ENCODE measurements at regions of chr20 and their contacts with region 1.

Region 1: GRCh38 chr20:49508435-49509199 is 26.1 kb upstream of the KCNB1 start:
- DNase-seq: no peak
- H3K4me3 ChIP-seq: no peak overlapping the region
- H3K27me3 ChIP-seq: peaks cover 5% of the 10 kb centered on the region; the same call in 1 of the 2 replicates
- CTCF ChIP-seq: peak; percentile 63

Region 2: DNA sequence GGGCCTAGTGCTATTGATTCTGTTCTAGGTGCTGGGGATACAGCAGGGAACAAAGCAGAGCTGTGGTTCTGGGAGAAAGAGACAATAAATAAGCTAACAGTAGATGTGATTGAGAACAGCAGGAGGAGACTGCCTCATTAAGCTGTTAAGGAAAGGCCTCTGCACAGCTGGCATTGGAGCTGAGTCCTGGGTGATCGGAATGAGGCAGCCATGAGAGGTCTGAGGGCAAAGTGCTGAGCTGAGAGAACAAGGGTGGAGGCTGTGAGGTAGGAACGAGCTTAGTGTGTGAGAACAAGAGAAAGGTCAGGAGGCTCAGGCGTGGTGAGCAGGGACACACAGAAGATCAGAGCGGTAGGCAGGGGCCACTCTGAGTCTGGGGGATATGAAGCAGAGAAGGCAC is 271.1 kb before region 1 on chr20:
- CTCF ChIA-PET with region 1: no interaction called
- POLR2A ChIA-PET with region 1: no interaction called
- DNase-seq: no peak
- H3K4me3 ChIP-seq: no peak overlapping the region
- H3K27me3 ChIP-seq: no peaks in the 10 kb centered on the region
- CTCF ChIP-seq: no peak

Region 3: GRCh38 chr20:49328790-49329189 is 179.8 kb before region 1 on chr20:
- CTCF ChIA-PET with region 1: interaction called, 81 read pairs
- POLR2A ChIA-PET with region 1: no interaction called
- DNase-seq: no peak
- H3K4me3 ChIP-seq: no peak overlapping the region
- H3K27me3 ChIP-seq: peaks cover 28% of the 10 kb centered on the region
- CTCF ChIP-seq: no peak

Region 4: GRCh38 chr20:49338061-49338460 is 170.6 kb before region 1 on chr20:
- CTCF ChIA-PET with region 1: interaction called, 81 read pairs
- POLR2A ChIA-PET with region 1: interaction called, 4 read pairs
- DNase-seq: no peak
- H3K4me3 ChIP-seq: no peak overlapping the region
- H3K27me3 ChIP-seq: peaks cover under 1% of the 10 kb centered on the region; the same call in 1 of the 2 replicates
- CTCF ChIP-seq: no peak

Region 5: GRCh38 chr20:49361862-49362660 is 146.6 kb before region 1 on chr20:
- CTCF ChIA-PET with region 1: no interaction called
- POLR2A ChIA-PET with region 1: interaction called, 10 read pairs
- DNase-seq: no peak
- H3K4me3 ChIP-seq: no peak overlapping the region
- H3K27me3 ChIP-seq: peaks cover 4% of the 10 kb centered on the region; the same call in 1 of the 2 replicates
- CTCF ChIP-seq: no peak

Region 6: DNA sequence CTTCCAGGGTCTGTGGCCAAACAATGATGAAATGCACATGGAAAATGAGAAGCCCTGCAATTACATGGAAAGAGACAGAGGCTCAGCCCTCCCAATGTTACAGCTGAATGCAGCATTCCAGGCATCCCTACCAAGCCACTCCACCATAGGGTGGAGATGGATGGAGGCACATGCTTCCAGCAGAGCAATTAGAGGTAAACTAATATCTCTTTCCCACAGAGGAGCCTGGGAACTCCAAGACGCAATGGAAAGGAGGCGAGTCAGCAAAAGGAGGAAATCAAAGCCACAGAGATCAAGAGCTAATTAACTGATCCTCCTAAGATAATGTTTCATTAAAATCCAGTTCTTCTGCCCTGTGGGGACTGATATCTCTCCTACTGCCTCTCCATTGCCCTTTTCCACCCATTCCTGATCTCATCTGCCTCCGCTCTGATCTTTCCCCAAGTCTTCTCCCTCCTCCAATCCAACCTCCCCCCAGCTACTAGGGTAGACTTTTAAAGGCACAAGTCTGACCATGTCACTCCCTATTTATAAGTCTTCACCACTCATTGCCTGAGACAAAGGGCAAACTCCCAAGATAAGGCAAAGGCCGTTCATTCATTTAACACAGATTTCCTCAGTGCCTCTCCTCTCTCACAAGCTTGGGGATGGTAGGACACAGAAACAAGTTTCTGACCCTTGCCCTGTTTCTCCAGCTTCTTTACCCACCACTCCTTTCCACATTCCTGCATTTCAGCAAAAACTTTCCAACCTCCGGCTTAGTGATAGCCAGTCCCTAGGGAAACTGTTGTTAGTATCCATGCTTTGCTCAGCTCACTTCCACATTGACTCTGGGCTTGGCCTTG is 11.8 kb before region 1 on chr20:
- CTCF ChIA-PET with region 1: interaction called, 32 read pairs
- POLR2A ChIA-PET with region 1: no interaction called
- DNase-seq: no peak
- H3K4me3 ChIP-seq: no peak overlapping the region
- H3K27me3 ChIP-seq: peaks cover 8% of the 10 kb centered on the region; the same call in 1 of the 2 replicates
- CTCF ChIP-seq: no peak

Region 7: GRCh38 chr20:49534255-49534712 is 25.7 kb after region 1 on chr20:
- CTCF ChIA-PET with region 1: interaction called, 10 read pairs
- POLR2A ChIA-PET with region 1: no interaction called
- DNase-seq: no peak
- H3K4me3 ChIP-seq: no peak overlapping the region
- H3K27me3 ChIP-seq: no peaks in the 10 kb centered on the region
- CTCF ChIP-seq: peak; percentile 79

Region 8: GRCh38 chr20:49575551-49576060 is 67.0 kb after region 1 on chr20:
- CTCF ChIA-PET with region 1: no interaction called
- POLR2A ChIA-PET with region 1: no interaction called
- DNase-seq: no peak
- H3K4me3 ChIP-seq: no peak overlapping the region
- H3K27me3 ChIP-seq: no peaks in the 10 kb centered on the region; the same call in 1 of the 2 replicates
- CTCF ChIP-seq: no peak

Measured in BJ (cell line).